ENCODE measurements at regions of chr17 and their contacts with region 1.

Region 1: GRCh38 chr17:56819431-56820145 is 14.1 kb downstream of the C17orf67 start:
- DNase-seq: peak in 4 of 5 donors; percentile 71 to 86 (median 78)
- H3K4me3 ChIP-seq: no peak overlapping the region
- H3K27ac ChIP-seq: no peak overlapping the region
- H3K4me1 ChIP-seq: peaks cover 0 to 4% (median 0%) of the 10 kb centered on the region in 3 donors
- H3K27me3 ChIP-seq: no peaks in the 10 kb centered on the region
- CTCF ChIP-seq: peak; percentile 91

Region 2: GRCh38 chr17:56939901-56940343 is 120.3 kb after region 1 on chr17:
- intact Hi-C with region 1: loop called (anchors 10 kb)
- DNase-seq: peak in 2 of 5 donors; percentile 77 to 80
- H3K4me3 ChIP-seq: no peak overlapping the region
- H3K27ac ChIP-seq: no peak overlapping the region
- H3K4me1 ChIP-seq: no peaks in the 10 kb centered on the region
- H3K27me3 ChIP-seq: no peaks in the 10 kb centered on the region
- CTCF ChIP-seq: peak; percentile 62